OCI-LY7 (cell line): ENCODE measurements at regions of chr11 and their contacts with region 1.

Region 1: GRCh38 chr11:129950101-129951091 is 52.2 kb downstream of the PRDM10 start:
- DNase-seq: peak; percentile 76
- H3K4me3 ChIP-seq: peak overlapping the region; percentile 45
- H3K27ac ChIP-seq: peak overlapping the region; percentile 91
- H3K4me1 ChIP-seq: peaks cover 56% of the 10 kb centered on the region
- CTCF ChIP-seq: no peak

Region 2: DNA sequence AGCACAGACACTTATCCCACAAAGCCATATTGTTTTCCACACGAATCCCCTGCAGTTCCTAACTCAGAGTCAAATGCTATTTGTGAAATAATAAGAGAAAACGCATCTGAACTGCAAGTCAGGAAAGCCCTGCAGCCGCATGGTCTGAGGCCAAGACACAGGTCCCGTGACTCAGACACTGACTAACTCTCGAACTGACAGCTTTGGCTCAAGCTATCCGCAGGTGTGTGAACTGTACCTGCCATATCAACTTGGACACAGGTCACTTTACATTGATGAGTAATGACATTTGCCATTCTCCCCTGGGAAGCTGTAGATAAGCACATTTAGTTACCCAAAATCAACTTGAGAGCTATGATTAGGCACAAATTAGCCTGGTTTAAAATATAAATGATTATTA is 20.1 kb before region 1 on chr11:
- CTCF ChIA-PET with region 1: interaction called, 3 read pairs
- POLR2A ChIA-PET with region 1: interaction called, 14 read pairs
- intact Hi-C with region 1: no loop called
- DNase-seq: no peak
- H3K4me3 ChIP-seq: no peak overlapping the region
- H3K27ac ChIP-seq: no peak overlapping the region
- H3K4me1 ChIP-seq: peaks cover 6% of the 10 kb centered on the region
- CTCF ChIP-seq: no peak

Region 3: GRCh38 chr11:129960216-129961214 is 10.1 kb after region 1 on chr11:
- CTCF ChIA-PET with region 1: interaction called, 8 read pairs
- POLR2A ChIA-PET with region 1: interaction called, 30 read pairs
- intact Hi-C with region 1: no loop called
- DNase-seq: peak; percentile 47
- H3K4me3 ChIP-seq: peak overlapping the region; percentile 53
- H3K27ac ChIP-seq: peak overlapping the region; percentile 59
- H3K4me1 ChIP-seq: peaks cover 81% of the 10 kb centered on the region
- CTCF ChIP-seq: no peak

Region 4: GRCh38 chr11:129992161-129992944 is 42.0 kb after region 1 on chr11:
- CTCF ChIA-PET with region 1: interaction called, 4 read pairs
- POLR2A ChIA-PET with region 1: interaction called, 33 read pairs
- intact Hi-C with region 1: loop called (anchors 2 kb)
- DNase-seq: peak; percentile 91
- H3K4me3 ChIP-seq: no peak overlapping the region
- H3K27ac ChIP-seq: peak overlapping the region; percentile 45
- H3K4me1 ChIP-seq: peaks cover 56% of the 10 kb centered on the region
- CTCF ChIP-seq: peak; percentile 92

Region 5: DNA sequence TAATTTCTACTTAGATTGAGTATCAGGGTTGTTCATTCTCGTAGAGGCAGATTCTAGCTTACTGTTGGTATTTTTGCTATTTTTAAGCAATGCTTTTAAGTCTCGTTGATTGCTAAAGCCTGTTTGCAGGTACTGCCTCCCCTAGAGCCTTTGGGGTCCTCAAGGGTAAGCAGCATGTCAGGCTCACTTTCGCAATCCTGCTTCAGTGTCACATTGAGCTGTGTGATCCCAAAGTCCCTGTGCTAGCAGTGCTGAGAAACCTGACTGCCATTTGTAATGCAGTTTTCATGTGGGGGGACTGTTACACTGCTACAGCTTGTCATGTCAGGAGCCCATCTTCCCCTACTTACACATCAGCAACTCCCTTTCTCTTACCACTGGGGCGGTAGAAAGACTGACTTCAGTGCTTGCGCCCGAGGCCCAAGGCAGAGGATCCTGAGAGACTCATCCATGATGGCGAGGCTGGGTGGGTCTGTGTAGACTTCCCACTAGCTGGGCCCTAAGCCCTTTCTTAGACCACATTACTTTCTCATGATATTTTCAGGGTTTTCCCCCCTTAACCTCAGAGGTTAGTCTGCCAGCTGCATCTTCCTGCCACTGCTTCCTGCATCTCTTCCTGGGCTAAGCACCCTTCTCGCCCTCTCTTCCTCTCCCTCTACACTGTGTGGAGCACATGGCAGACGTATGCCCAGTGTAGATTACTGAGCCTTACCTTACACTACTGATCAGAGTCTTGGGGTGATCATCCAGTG is 168.4 kb after region 1 on chr11:
- CTCF ChIA-PET with region 1: no interaction called
- POLR2A ChIA-PET with region 1: interaction called, 12 read pairs
- intact Hi-C with region 1: loop called (anchors 1 kb)
- DNase-seq: peak; percentile 83
- H3K4me3 ChIP-seq: peak overlapping the region; percentile 61
- H3K27ac ChIP-seq: peak overlapping the region; percentile 90
- H3K4me1 ChIP-seq: peaks cover 89% of the 10 kb centered on the region
- CTCF ChIP-seq: no peak